ENCODE measurements at regions of chr20 and their contacts with region 1.

Region 1: DNA sequence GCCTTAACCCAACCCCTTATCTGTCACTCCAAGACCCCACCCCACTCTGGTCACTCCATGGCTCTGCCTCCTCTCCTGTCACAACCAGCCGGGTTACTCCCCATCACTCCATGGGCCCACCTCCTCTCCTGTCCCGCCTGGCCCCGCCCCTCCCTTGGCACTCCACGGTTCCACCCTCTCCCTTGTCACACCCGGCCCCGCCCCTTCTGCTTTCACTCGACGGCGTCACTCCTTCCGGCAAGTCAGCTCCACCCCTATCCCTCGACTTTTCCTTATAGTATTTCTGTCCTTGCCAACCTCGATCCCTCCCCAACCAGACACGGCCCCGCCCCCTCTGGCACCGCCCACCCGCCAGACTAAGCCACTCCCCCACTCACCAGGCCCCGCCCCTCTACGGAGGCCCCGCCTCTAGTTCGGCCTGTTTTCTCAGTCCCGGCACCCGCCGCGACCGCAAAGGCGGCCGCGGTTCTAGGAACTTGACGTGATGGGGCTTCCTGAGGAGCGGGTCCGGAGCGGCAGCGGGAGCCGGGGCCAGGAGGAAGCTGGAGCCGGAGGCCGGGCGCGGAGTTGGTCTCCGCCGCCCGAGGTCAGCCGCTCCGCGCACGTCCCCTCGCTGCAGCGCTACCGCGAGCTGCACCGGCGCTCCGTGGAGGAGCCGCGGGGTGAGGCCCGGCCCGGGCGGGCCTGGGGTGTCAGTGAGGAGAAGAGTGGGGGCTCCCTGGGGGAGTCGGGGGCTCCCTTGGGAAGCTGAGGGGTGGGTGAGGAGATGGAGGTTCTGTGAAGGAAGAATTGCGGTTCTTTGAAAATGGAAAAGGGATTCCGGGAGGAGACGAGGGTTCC is at the start of gene ACSS2:
- DNase-seq: peak; percentile 99
- ATAC-seq: peak; percentile 86
- H3K4me3 Mint-ChIP-seq: peak within 1 kb of the TSS; percentile 90
- H3K27ac Mint-ChIP-seq: peak within 1 kb of the TSS; percentile 85
- H3K4me1 Mint-ChIP-seq: peaks cover 54% of the 10 kb centered on the region
- H3K27me3 Mint-ChIP-seq: no peaks in the 10 kb centered on the region
- total RNA-seq, gene ACSS2: 29.9 to 35.1 TPM

Region 2: GRCh38 chr20:34676642-34677373 is 199.6 kb before region 1 on chr20 and contains the start of gene PIGU:
- CTCF ChIA-PET with region 1: no interaction called
- POLR2A ChIA-PET with region 1: no interaction called
- intact Hi-C with region 1: loop called in 1 of 2 experiments (anchors 1 kb)
- DNase-seq: peak; percentile 98
- ATAC-seq: peak; percentile 97
- H3K4me3 Mint-ChIP-seq: peak within 1 kb of the TSS; percentile 97
- H3K27ac Mint-ChIP-seq: peak within 1 kb of the TSS; percentile 96
- H3K4me1 Mint-ChIP-seq: peaks cover 34% of the 10 kb centered on the region
- H3K27me3 Mint-ChIP-seq: no peaks in the 10 kb centered on the region
- total RNA-seq, gene PIGU: 21.1 to 28.2 TPM

Region 3: DNA sequence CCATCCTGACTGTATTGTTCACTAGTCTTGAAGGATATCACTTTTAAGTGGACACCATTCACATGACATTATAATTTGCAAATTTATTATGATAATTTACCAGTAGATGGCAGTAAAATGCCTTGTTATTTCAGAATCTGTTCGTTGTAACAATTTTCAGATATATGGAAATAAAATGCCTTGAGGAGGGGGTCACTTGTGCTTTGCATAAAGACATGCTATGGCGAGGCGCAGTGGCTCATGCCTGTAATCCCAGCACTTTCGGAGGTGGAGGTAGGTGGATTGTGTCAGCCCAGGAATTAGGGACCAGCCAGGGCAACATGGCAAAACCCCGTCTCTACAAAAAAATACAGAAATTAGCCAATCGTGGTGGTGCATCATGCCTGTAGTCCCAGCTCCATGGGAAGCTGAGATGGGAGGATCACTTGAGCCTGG is 41.9 kb before region 1 on chr20:
- CTCF ChIA-PET with region 1: interaction called, 3 read pairs
- POLR2A ChIA-PET with region 1: no interaction called
- intact Hi-C with region 1: loop called (anchors 2 to 5 kb)
- DNase-seq: no peak
- ATAC-seq: peak; percentile 42
- H3K4me3 Mint-ChIP-seq: no peak overlapping the region
- H3K27ac Mint-ChIP-seq: no peak overlapping the region
- H3K4me1 Mint-ChIP-seq: no peaks in the 10 kb centered on the region
- H3K27me3 Mint-ChIP-seq: peaks cover 8% of the 10 kb centered on the region

Region 4: DNA sequence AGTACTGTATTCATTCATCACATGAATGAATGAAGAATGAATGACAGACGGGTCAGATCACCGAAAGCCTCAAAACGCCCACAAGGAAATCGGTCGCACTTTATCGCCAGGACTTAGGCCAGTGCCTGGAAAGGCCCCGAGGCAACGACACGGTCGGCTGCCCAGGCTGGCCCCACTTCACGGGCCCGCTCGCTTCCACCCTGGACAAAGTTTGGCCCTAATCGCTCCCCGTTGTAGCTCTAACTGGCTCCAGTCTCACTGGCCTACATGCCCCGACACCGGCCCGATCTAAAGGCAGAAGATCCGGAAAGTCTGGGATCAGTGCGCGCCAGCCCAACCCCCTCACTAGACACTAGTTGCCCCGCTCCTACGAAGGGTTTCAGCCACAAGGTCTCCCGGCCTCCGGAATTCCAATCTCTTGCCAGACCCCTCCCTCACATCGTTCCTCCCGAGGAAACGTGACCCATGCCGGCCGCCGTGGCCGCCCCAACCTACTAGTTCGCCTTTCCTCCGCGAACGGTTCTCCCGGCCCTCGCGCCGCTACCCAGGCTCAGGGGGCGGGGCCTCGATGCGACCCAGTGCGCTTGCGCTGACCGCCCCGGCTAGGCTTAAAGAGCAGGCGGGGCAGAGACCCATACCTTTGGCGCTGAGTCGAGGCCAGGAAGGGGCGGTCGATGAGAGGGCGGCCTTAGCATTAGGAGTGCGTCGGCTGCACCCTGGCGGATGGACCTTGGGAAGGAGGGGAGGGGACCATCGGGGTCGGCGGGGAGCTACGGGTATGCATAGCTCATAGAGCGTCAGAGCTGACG is 79.1 kb after region 1 on chr20 and contains the starts of genes GSS and MYH7B:
- CTCF ChIA-PET with region 1: interaction called, 78 read pairs
- POLR2A ChIA-PET with region 1: interaction called, 4 read pairs
- intact Hi-C with region 1: loop called (anchors 1 kb)
- DNase-seq: peak; percentile 99
- ATAC-seq: peak; percentile 95
- H3K4me3 Mint-ChIP-seq: peak within 1 kb of the TSS; percentile 98
- H3K27ac Mint-ChIP-seq: peak within 1 kb of the TSS; percentile 94
- H3K4me1 Mint-ChIP-seq: peaks cover 16% of the 10 kb centered on the region
- H3K27me3 Mint-ChIP-seq: no peaks in the 10 kb centered on the region
- total RNA-seq, gene GSS: 58.7 to 59.5 TPM
- total RNA-seq, gene MYH7B: 0.23 to 0.40 TPM

Region 5: DNA sequence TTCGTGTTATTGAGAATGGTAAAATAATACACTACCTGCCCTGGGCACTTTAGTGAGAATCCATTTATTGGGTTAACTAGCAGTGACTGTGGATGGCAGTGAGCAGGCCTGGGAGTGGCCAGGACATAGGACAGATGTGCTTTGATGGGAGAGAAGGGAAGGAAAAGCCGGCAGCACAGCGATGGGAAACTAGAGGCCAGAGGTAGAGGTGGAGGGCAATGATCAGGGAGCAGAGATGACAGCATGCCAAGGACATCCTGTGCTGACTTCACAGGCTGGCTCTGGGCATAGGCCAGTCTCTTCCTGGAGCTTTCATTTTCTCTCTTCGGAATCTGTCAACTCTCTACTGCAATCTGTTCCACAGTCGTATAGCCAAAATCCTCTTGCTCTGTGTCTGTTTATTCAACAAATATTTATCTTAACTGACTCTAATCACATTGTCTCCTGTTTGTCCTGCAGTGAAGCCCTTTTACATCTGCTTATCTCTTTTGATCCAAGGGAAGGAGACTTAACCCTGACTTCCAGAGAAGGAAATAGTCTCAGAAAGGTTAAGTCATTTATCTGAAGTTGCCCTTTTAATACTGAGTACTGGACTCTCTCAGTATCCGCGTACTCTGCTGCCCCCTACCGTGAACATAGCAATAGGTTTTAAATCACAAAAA is 331.7 kb after region 1 on chr20:
- CTCF ChIA-PET with region 1: no interaction called
- POLR2A ChIA-PET with region 1: no interaction called
- intact Hi-C with region 1: loop called in 1 of 2 experiments (anchors 1 kb)
- DNase-seq: peak; percentile 88
- ATAC-seq: peak; percentile 95
- H3K4me3 Mint-ChIP-seq: no peak overlapping the region
- H3K27ac Mint-ChIP-seq: no peak overlapping the region
- H3K4me1 Mint-ChIP-seq: no peaks in the 10 kb centered on the region
- H3K27me3 Mint-ChIP-seq: no peaks in the 10 kb centered on the region

Region 6: DNA sequence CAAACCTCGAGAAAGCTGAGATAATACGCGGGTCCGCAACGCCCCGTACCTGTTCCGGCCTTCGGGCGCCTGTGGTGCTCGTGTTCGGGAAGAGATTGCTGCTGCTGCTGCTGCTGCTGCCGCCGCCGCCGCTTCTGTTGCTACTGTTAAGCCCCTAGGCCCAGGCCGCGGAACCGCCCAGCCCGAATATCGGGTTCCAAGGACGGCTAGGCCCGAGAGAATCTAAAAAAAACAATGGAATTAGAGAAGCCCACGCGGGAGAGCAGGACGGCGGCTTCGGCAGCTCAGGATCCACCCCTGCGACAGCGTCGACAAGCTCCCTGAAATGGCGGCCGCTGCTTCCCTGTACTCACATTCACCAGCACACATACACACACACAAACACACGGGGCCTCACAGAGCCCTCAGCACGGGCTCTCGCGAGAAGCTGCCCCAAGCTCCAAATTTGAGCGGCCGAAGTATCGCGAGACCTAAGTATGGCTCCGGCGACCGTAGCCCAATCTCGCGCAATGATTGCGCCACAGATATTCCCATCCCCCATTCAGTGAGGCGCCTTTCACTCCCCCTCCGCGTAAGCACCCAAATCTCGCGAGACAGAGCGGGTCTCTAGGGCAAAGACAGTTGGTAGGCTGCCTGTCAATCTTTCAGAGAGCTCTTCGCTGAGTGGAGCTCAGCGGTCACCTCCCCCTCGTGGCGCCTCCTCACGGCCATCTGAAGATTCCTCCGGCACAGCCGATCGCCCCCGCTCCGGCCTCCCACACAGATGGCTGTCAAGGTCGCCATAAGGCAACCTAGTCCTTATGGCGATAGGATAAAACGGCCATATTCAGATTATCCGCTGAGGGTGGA is 865.7 kb after region 1 on chr20 and contains the start of gene RBM39:
- CTCF ChIA-PET with region 1: no interaction called
- POLR2A ChIA-PET with region 1: no interaction called
- intact Hi-C with region 1: loop called in 1 of 2 experiments (anchors 10 kb)
- DNase-seq: peak; percentile 100
- ATAC-seq: peak; percentile 88
- H3K4me3 Mint-ChIP-seq: peak within 1 kb of the TSS; percentile 90
- H3K27ac Mint-ChIP-seq: peak within 1 kb of the TSS; percentile 100
- H3K4me1 Mint-ChIP-seq: peaks cover 45% of the 10 kb centered on the region
- H3K27me3 Mint-ChIP-seq: no peaks in the 10 kb centered on the region
- total RNA-seq, gene RBM39: 303 to 356 TPM

Measured in activated CD4-positive, alpha-beta T cell treated with anti-CD3 and anti-CD28 coated beads for 36 hours (primary cell).